ENCODE measurements at regions of chr18 and their contacts with region 1.

Region 1: DNA sequence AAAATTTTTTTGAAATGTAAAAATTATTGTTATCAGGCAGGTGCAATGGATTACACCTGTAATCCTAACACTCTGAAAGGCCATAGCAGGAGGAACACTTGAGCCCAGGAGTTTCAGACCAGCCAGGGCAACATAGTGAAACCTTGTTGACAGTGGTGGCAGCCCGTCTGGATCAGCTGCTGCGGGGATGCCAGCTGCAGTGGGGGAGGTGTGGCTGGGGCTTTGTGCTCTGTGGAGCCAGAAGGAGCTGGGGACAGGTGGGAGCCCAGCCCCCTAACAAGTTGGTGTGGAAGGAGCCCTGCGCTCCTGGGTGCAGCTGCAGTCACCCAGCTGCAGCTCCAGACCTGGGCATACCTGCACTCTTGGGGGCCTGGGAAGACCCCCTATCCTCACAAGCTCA is 182.4 kb upstream of the MC4R start:
- DNase-seq: peak in 1 of 2 donors; percentile 17
- H3K4me3 ChIP-seq: no peak overlapping the region
- H3K27ac ChIP-seq: no peak overlapping the region
- H3K4me1 ChIP-seq: no peaks in the 10 kb centered on the region
- H3K27me3 ChIP-seq: peaks cover 0 to 9% (median 0%) of the 10 kb centered on the region in 3 donors
- CTCF ChIP-seq: no peak
- EP300 ChIP-seq: no peak
- POLR2A ChIP-seq: no peak

Region 2: DNA sequence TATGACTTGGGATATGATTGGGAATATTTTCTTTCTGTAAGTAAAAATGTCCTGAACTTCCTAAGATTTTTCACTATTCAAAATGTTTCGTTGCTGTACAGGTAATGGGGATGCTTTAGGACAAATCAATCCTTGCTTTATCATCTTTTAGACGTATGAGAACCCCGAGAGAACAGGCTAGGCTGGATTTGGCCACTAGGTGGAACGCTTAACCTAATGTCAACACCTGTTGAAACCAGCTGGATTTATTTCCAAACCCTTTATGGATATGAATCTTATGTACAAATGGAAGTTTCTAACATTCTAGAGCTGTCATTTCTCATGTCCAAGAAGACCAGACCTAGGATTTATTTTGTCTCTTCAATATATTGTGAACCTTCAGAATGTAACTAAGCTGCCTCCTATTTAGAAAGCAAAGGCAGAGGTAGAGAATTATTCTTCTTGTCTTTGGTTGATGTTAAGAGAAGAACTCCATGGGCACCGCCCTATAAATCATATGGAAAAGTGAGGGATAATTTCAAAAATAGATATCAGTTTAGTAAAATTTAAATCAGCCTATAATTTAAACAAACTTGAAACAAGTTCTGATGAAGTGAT is 558.5 kb before region 1 on chr18:
- intact Hi-C with region 1: loop called (anchors 10 kb)
- DNase-seq: peak; percentile 41 to 72
- H3K4me3 ChIP-seq: no peak overlapping the region
- H3K27ac ChIP-seq: no peak overlapping the region
- H3K4me1 ChIP-seq: no peaks in the 10 kb centered on the region
- H3K27me3 ChIP-seq: no peaks in the 10 kb centered on the region
- CTCF ChIP-seq: peak in 5 of 7 experiments; percentile 30 to 56 (median 47)
- EP300 ChIP-seq: no peak
- POLR2A ChIP-seq: no peak

Measured in stomach (tissue), 19 donors.